ENCODE measurements at regions of chr2 and their contacts with region 1.

Region 1: GRCh38 chr2:176079831-176080539 is 3.8 kb downstream of the EVX2 start:
- DNase-seq: peak; percentile 84 to 95 (median 94)
- ATAC-seq: peak; percentile 97
- H3K4me3 ChIP-seq: peak overlapping the region; percentile 52
- H3K27ac ChIP-seq: no peak overlapping the region
- H3K4me1 ChIP-seq: peaks cover 3 to 29% of the 10 kb centered on the region in 2 experiments; a peak in 3 of 5 replicates
- H3K27me3 ChIP-seq: peaks cover 49 to 68% of the 10 kb centered on the region in 2 experiments
- CTCF ChIP-seq: peak; percentile 97 to 99 (median 98)
- EP300 ChIP-seq: no peak
- POLR2A ChIP-seq: no peak
- RAD21 ChIP-seq: peak; percentile 89 to 94

Region 2: GRCh38 chr2:175864137-175864850 is 215.7 kb before region 1 on chr2:
- CTCF ChIA-PET with region 1: no interaction called
- POLR2A ChIA-PET with region 1: no interaction called
- in situ Hi-C with region 1: no loop called
- intact Hi-C with region 1: loop called (anchors 10 kb)
- DNase-seq: peak in 1 of 4 experiments; percentile 16
- ATAC-seq: peak; percentile 68
- H3K4me3 ChIP-seq: no peak overlapping the region
- H3K27ac ChIP-seq: no peak overlapping the region
- H3K4me1 ChIP-seq: no peaks in the 10 kb centered on the region; a peak in 1 of 5 replicates
- H3K27me3 ChIP-seq: peaks cover 15 to 38% of the 10 kb centered on the region in 2 experiments; a peak in 4 of 5 replicates
- CTCF ChIP-seq: 0 out of 6 replicates have a peak, but pooled peaks of 1 of the 3 experiments have one; percentile 14
- EP300 ChIP-seq: no peak
- POLR2A ChIP-seq: no peak
- RAD21 ChIP-seq: no peak

Region 3: DNA sequence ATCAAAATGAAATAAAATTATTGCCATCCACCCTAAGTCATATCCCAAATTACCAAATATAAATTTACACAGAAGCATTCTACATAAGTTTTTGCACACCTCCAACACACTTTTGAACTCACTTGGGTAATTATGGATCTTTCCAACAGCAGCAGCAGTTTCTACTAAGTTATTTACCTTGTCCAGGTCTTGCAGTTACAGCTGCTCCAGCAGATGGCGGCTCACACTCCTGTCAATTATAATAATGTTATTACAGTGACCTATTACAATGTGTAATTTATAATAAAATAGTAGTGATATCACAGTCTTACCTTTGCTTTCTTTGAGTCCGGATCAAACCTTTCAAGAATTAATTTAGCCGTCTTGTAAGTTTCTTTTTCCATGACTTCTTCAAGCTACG is 115.8 kb before region 1 on chr2:
- CTCF ChIA-PET with region 1: interaction called, 4 read pairs
- POLR2A ChIA-PET with region 1: no interaction called
- in situ Hi-C with region 1: no loop called
- intact Hi-C with region 1: loop called (anchors 1 kb)
- DNase-seq: peak in 1 of 4 experiments; percentile 17
- ATAC-seq: peak; percentile 70
- H3K4me3 ChIP-seq: no peak overlapping the region
- H3K27ac ChIP-seq: no peak overlapping the region
- H3K4me1 ChIP-seq: no peaks in the 10 kb centered on the region
- H3K27me3 ChIP-seq: no peaks in the 10 kb centered on the region
- CTCF ChIP-seq: peak; percentile 26 to 47 (median 28); a peak in 3 of 6 replicates
- EP300 ChIP-seq: 0 out of 2 replicates have a peak, but pooled peaks have one; percentile 7
- POLR2A ChIP-seq: no peak
- RAD21 ChIP-seq: peak in 1 of 2 experiments; percentile 32; a peak in 2 of 4 replicates